Calu3 (cell line): ENCODE measurements at regions of chr21 and their contacts with region 1.

Region 1: GRCh38 chr21:36141513-36141925 is 6.6 kb downstream of the CBR3 start:
- DNase-seq: peak; percentile 89
- H3K4me3 Mint-ChIP-seq: no peak overlapping the region
- H3K27ac Mint-ChIP-seq: peak overlapping the region; percentile 8
- H3K4me1 Mint-ChIP-seq: no peaks in the 10 kb centered on the region
- H3K27me3 Mint-ChIP-seq: no peaks in the 10 kb centered on the region
- CTCF ChIP-seq: peak; percentile 64

Region 2: DNA sequence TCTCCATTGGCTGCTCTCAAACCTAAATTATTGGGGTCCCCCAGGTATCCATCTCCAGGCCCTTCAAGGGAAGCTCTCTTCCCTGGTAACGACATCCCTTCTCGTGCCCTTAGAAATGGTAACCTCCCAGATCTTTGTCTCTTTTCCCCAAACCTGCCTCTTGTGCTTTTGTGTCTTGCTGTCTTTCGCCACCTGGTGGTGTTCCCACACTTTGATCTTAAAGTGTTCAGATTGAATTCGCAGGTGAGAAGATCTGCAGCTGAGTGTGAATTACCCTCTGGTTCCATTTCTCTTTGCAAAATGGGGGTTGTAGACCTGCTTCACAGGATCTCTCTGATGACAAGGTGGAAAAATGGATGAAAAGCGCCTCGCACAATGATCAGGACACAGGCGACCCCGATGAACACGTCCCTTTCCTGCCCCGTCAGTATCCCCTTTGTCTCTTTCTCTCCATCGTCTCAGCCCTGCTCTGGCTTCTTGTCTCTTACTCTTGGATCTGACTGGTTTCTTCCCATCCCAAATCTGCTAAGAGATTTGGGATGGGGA is 68.2 kb after region 1 on chr21:
- CTCF ChIA-PET with region 1: interaction called, 9 read pairs
- intact Hi-C with region 1: loop called (anchors 1 kb)
- DNase-seq: peak; percentile 59
- H3K4me3 Mint-ChIP-seq: peak overlapping the region; percentile 51
- H3K27ac Mint-ChIP-seq: peak overlapping the region; percentile 76
- H3K4me1 Mint-ChIP-seq: peaks cover 30% of the 10 kb centered on the region
- H3K27me3 Mint-ChIP-seq: no peaks in the 10 kb centered on the region
- CTCF ChIP-seq: peak; percentile 44

Region 3: GRCh38 chr21:36330904-36331303 is 189.4 kb after region 1 on chr21:
- CTCF ChIA-PET with region 1: no interaction called
- intact Hi-C with region 1: loop called (anchors 1 kb)
- DNase-seq: peak; percentile 31
- H3K4me3 Mint-ChIP-seq: no peak overlapping the region
- H3K27ac Mint-ChIP-seq: no peak overlapping the region
- H3K4me1 Mint-ChIP-seq: peaks cover 12% of the 10 kb centered on the region
- H3K27me3 Mint-ChIP-seq: no peaks in the 10 kb centered on the region
- CTCF ChIP-seq: peak; percentile 22